AG04449 (cell line): ENCODE measurements at regions of chr14 and their contacts with region 1.

Region 1: DNA sequence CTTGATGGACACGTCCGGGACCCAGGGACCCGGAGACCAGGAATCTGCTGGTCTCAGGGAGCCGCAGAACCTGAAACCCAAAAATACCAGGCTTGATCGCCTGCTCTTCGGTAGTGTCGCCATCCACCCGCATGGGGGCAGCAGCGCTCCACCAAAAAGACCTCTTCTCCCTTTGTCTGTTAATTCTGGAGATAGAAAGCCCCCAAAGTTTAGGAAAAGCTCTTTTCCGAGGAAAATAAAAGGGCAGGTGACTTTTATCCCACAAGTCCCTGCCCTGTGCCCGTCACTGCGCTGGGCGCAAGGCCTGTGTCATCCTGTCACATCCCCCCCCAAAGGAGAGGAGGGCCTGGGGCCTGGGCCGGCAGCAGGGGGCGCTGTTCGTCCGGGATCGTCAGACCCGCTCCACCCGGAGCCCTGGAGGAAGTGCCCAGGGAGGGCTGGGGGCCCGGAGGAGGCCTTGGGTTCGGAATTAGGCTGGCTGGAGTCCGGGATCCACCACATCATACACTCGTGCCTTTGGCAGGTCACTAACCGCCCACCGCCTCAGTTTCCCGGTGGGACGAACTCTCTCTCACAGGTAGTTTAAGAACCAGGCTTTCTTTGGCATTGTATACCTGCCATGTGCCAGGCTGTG is 31.9 kb downstream of the DAD1 start:
- DNase-seq: no peak
- H3K4me3 ChIP-seq: peak overlapping the region; percentile 44
- CTCF ChIP-seq: peak; percentile 96

Region 2: DNA sequence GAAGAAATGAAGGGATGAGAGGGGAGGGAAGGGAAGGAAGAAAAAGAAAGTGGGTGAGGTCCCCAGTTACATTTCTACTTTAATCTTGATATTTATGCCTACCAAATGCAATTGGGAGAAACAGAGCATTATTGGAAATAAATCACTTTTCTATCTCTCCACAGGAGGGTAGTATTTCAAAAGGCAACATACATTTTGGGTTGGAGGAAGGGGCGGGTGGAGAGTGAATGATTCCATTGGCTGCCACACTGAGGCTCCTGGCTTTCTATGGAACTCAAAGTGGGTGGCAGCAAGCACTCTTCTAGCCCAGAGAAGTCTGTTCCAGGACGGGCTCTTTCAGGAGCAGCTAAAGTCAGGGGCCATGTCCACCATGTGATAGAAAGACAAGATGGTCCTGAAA is 409.4 kb before region 1 on chr14:
- CTCF ChIA-PET with region 1: no interaction called
- POLR2A ChIA-PET with region 1: no interaction called
- DNase-seq: no peak
- H3K4me3 ChIP-seq: no peak overlapping the region
- CTCF ChIP-seq: no peak

Region 3: DNA sequence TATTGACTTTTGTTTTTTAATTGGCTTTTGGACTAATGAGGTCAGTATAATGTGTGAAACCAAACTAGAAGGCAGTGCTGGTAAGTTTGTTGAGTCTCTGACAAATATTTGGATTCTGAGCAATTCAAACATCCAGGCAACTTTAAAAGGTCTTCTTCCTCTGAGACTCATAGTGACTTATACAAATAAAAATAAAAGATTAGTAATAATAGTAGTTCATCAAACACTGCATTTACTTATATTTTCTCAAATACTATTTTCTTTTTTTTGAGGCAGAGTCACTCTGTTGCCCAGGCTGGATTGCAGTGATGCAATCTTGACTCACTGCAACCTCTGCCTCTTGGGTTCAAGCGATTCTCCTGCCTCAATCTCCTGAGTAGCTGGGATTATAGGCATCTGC is 306.0 kb before region 1 on chr14:
- CTCF ChIA-PET with region 1: no interaction called
- POLR2A ChIA-PET with region 1: no interaction called
- DNase-seq: no peak
- H3K4me3 ChIP-seq: no peak overlapping the region
- CTCF ChIP-seq: no peak

Region 4: DNA sequence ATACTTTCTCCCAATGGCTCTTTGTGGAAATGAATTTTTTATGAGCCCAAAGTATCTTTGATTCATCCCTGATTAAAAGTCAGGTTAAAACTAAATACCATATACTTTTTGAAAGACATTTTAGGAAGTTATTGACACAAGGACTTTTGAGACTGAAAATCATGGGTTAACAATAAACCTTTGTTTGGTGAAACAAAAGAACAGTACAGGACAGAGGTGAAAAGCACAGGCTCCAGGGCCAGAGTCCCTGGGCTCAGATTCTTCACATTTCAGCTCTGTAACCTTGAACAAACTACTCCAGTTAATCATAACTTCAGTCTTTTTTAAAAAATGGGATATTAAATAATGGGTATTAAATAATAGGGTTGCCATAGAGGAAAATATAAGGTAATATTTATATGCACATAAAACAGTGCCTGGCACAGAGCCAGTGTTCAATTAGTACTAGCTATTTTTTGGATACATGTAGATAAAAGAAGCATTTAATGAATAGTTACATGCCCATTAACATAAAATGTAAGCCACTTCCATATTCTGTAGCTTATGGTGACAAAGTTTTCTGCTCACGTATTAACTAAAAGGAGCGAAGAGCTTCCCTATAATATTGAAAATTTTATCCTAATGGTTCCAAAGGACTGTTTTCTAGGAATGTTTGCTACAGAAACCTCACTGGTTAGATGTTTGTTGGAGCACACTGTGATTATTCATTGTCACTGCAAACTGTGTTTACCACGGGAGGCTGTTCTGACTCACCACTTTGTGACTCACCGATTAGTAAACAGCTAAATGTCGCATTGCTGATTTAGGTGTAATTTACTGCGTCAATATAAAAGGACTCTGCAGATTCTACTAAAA is 223.5 kb before region 1 on chr14:
- CTCF ChIA-PET with region 1: no interaction called
- POLR2A ChIA-PET with region 1: no interaction called
- DNase-seq: no peak
- H3K4me3 ChIP-seq: no peak overlapping the region
- CTCF ChIP-seq: no peak

Region 5: DNA sequence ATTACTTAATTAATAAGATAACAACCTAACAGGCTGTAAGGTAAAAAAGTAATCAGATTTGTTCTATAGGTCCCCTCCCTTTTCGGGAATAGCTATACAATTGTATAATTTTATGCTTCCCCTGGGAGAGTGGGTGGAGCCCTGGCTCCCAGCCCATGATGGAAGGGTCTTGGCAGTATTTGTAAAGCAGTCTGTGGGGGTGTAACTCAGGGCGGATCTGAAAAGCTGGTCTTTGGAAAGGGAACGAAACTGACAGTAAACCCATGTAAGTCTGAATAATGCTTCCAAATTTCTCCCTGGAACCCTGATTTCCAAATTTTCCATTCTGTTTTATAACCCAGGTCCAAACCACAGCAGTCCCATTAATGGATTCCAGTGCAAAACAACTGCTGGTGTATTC is 78.4 kb before region 1 on chr14:
- CTCF ChIA-PET with region 1: interaction called, 21 read pairs
- POLR2A ChIA-PET with region 1: no interaction called
- DNase-seq: no peak
- H3K4me3 ChIP-seq: no peak overlapping the region
- CTCF ChIP-seq: no peak

Region 6: DNA sequence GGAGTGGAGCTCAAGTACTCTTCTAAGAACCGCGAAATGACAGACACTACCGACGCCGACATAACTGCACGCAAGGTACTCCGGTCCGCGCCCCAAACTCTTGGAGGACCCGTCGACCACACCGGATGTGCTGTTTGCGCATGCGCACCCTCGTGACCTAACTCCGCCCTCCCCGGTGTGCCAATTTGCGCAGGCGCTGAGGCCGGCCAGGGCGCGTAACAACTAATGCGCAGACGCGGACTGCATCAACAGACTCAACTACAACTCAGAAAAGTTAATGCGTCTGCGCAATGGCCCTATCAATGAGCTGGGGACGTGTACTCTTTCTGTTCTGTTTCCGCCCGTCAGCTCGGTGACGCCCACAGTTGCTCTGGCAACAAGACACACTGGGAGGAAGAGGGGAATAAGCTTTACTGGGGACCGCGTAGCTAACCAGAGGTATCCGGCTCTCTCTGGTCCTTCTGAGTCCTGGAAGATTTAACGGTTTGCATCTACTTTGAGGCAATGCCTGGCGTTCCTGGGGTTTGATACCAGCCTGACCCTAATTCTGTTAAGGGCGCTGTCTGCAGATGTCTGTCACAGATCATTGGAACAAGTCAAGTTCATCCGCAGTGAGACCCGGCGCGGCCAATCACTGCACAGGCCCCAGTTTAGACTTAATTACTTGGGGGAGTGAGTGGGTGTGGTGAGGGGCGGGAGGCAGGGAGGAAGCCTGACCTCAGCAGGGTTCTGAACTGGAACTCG is 32.2 kb after region 1 on chr14 and contains the start of gene DAD1:
- CTCF ChIA-PET with region 1: interaction called, 24 read pairs
- POLR2A ChIA-PET with region 1: interaction called, 4 read pairs
- DNase-seq: peak; percentile 97
- H3K4me3 ChIP-seq: peak within 1 kb of the TSS; percentile 89
- CTCF ChIP-seq: no peak

Region 7: DNA sequence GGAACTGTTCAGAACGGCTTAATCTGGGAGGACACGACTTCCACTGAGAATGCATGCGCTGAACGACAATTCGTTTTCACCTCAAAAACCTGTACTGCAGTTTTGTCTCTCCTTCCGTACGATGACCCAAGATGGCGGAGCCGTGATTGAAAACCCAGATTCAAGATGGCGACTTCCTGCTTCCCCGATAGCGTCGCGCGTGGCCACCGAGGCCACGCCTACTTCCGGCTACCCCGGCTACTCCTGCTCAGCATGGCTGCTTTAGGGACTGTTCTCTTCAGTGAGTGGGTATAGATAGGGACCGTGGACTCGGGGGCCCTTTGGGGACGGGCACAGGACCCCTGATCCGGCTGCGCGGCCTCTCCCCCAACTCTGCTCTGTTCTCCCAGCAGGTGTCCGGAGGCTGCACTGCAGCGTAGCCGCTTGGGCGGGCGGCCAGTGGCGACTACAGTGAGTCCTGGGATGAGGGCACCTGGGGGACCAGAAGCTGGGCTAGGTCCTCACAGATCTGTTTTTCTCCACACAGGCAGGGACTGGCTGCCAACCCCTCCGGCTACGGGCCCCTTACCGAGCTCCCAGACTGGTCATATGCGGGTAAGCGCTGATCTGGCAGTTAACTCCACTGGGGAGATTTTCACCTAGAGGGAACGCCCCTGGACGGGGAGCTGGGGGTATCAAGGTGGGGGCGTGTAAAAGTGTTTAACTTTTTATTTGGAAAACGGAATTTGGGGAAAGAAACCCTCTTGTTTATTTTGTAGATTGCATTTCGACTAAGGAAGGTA is 272.7 kb after region 1 on chr14 and contains the start of gene MRPL52:
- CTCF ChIA-PET with region 1: interaction called, 56 read pairs
- POLR2A ChIA-PET with region 1: no interaction called
- DNase-seq: no peak
- H3K4me3 ChIP-seq: peak within 1 kb of the TSS; percentile 94
- CTCF ChIP-seq: no peak

Region 8: DNA sequence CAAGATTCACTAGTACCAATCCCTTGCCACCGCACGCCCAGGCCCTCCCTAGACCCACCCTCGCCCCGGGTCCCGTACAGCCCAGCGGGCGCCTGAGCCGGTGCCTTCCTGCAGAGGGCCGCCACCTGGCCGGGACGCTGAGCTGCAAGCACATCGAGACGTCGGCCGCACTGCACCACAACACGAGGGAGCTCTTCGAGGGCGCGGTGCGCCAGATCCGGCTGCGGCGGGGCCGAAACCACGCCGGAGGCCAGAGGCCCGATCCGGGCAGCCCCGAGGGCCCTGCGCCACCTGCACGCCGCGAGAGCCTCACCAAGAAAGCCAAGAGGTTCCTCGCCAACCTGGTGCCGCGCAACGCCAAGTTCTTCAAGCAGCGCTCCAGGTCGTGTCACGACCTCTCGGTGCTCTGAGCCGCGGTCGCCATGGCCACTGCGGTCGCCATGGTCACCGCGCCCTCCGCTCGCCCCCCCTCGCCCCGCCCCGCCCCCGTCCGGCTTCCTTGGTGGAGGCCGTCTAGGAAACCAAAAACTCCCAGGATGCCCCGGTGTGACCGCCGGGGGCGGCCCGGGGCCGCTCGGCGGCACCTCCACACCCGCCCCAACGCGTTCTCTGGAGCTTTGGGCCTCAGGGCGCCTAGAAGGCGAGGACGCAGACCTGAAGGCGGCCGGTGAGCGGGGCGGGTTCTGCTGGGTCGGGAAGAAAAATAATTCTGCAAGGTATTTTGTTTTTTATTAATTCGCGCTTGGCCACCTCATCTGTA is 329.6 kb after region 1 on chr14:
- CTCF ChIA-PET with region 1: interaction called, 20 read pairs
- POLR2A ChIA-PET with region 1: no interaction called
- DNase-seq: no peak
- H3K4me3 ChIP-seq: peak overlapping the region; percentile 57
- CTCF ChIP-seq: peak; percentile 32

Region 9: GRCh38 chr14:22986508-22987054 is 429.5 kb after region 1 on chr14:
- CTCF ChIA-PET with region 1: interaction called, 87 read pairs
- POLR2A ChIA-PET with region 1: no interaction called
- DNase-seq: peak; percentile 49
- H3K4me3 ChIP-seq: no peak overlapping the region
- CTCF ChIP-seq: peak; percentile 79